Posterior vena cava (tissue), 2 donors: ENCODE measurements at regions of chr5 and their contacts with region 1.

Region 1: GRCh38 chr5:74382987-74383593 is 257.4 kb downstream of the ENC1 start:
- DNase-seq: peak; percentile 85

Region 2: DNA sequence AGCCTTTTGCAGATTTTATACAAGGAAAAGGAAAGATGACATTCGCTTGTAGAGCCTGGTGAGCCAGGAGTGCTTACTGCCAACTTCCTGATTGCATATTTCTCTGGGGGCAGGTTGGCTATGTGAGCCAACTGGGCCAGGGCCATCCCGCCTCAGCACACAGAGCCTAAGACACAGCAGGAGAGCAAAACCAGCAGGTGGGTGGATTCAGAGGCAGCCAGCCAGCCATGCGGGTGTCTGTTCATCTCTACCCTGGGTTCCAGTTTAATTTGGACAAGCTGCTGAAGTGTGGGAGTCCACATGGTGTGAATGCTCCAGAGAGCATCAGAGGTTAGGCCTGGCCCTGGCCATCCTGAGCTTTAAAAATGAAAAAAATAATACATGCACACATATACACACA is 465.7 kb before region 1 on chr5:
- intact Hi-C with region 1: no loop called
- DNase-seq: no peak

Region 3: GRCh38 chr5:74538206-74538661 is 155.1 kb after region 1 on chr5:
- intact Hi-C with region 1: loop called in 1 of 2 experiments (anchors 10 kb)
- DNase-seq: no peak